Left cardiac atrium (tissue), 4 donors: ENCODE measurements at regions of chr4 and their contacts with region 1.

Region 1: DNA sequence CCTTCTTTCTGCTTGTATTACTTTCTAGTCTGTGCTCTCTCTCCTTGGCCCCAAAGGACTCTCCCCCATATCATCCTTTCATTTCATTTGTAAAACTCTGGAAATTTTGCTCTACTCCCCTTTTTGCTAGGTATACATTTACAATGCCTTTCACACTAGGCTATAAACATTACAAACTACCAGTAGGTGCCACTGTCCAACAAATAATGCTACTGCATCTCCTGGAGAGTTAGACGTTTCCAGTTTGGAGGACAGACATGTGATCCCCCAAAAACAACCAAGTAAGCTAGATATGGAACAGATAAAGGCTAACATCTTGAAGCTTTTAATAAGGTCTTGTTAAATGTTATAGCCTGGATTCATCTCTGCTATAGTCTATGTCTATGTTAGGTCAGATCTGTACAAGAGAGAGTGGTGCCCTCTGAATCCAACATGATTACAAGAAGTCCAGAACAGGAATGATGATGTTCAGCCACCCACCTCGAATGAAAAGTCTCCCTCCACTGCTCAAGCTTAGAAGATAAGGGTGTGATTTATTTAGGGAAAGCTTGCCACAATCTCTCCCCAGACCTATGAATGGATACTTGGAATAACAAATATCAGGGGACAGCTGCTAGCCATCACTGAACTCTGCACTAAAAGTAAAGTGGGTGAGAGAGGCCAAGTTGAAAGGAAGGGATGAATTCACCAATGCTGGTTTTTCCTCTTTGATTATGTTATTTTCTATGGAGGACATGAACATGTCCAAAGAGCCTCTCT is 14.3 kb downstream of the CBR4 start:
- DNase-seq: no peak
- ATAC-seq: peak in 1 of 2 donors; percentile 37

Region 2: DNA sequence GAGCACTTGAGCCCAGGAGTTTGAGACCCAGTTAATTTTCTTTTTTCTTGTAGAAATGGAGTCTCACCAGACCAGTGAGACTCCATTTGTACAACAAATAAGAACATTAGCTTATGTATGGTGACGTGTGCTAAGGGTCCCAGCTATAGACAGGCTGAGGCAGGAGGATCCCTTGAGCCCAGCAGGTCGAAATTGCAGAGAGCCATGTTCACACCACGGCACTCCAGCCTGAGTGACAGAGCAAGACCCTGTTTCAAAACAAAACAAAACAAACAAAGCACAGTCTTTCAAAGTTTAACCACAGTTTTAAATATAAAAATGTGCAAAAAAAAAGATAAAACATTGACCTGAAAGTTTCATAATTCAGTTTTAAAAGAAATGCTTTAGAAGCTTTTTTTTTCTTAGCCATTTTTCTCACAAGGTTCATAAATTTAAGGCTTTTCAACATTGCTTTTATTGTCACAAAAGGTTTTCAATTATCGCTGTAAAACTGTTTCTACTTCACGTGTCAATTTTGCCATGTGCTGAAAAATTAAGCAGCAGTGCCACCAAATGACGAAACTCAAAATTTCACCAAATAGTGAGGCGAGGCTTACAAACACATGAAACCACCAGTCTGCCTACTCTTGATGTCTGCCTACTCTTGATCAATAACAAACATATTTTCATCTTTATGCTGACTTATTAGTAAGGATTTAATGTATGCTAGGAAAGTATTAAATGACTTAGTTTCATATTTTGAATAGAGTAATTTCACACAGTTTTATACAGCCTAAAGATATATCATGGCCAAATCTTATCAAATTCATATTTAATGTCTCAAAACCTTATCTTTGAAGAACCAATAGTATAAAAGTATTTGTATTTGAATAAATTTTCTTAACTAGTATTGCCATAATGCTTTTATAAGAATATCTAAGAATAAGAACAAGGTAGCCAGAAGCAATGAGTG is 490.4 kb after region 1 on chr4:
- intact Hi-C with region 1: loop called in 1 of 2 experiments (anchors 5 kb)
- DNase-seq: no peak
- ATAC-seq: peak in 1 of 2 donors; percentile 47

Region 3: DNA sequence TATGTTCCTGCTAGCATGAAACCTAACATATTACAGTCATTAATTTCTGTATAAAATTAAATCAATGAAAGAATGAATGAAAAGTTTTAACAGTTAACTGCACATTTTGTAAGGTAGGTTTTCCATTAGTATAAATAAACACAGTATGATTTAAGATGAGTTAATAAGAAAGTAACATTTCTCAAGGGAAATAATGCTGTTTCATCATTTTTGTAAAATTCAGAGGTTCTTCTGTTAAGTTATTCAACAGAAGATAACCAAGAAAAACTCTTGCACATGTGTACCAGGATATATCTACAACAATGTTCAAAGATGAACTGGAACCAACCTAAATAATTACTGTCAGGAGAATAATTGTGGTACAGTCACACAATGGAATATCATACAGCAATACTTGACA is 528.1 kb after region 1 on chr4:
- intact Hi-C with region 1: no loop called
- DNase-seq: no peak
- ATAC-seq: no peak

Region 4: DNA sequence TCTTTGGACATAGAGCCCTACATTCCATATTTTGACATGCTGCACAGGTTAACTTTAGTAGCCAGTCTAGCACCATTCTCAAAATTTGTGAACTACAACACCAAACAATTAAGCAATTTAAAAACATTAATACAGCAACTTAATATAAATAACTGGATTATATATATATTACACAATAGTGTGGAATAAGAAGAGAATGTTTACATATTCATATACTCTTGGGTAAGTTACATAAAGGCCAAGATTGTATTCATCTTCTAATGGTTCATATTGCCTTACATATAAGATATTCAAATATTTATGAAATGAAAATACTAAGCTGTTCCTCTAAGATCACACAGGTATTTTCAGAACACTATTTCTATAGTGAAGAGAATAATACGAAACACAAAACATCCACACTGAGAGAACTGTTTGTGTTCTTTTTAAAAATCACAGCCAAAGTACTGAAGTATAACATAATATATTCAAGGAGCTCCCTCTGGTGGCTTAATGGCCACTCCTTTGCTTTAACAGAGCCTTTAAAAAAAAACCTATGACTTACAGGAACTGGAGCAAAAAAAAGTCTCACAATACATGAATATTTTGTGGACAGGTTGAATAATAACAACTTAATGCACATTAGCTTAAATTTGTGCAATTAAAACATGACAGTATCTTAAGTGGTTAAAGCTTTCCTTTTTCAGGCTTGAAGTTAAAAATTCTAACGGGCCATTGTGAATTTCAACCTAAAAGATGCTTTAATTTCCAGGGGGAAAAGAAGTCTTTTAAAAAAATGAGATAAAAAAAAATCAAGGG is 570.5 kb after region 1 on chr4:
- intact Hi-C with region 1: loop called in 1 of 2 experiments (anchors 10 kb)
- DNase-seq: no peak
- ATAC-seq: peak; percentile 66 to 67